Endothelial cell of umbilical vein (primary cell): ENCODE measurements at regions of chr3 and their contacts with region 1.

Region 1: GRCh38 chr3:4271834-4272233 is 31.3 kb upstream of the SETMAR start:
- DNase-seq: peak; percentile 35
- H3K4me3 ChIP-seq: no peak overlapping the region
- H3K27ac ChIP-seq: no peak overlapping the region
- H3K4me1 ChIP-seq: no peaks in the 10 kb centered on the region
- H3K27me3 ChIP-seq: peaks cover 0 to 3% of the 10 kb centered on the region in 2 experiments
- CTCF ChIP-seq: peak in 1 of 2 donors; percentile 25
- POLR2A ChIP-seq: no peak

Region 2: DNA sequence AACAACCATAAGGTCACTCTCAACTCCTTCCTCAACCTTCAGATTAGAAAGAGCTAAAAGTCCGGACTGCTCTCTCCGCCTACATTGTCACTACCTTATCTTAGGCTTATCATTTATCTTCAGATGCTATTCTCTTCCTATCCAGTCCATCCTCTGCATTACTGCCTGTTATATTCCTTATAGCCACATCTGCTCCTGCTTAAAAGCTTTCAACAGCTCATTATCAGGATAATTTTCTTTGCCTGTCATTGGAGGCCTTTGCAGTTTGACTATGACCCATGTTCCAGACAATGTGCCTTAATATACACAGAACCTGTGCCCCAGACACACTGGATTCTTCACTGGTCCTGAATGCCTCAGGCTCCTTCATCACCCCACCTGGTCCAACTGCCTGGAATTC is 152.7 kb before region 1 on chr3:
- CTCF ChIA-PET with region 1: interaction called, 10 read pairs
- POLR2A ChIA-PET with region 1: no interaction called
- dilution Hi-C with region 1: no loop called
- intact Hi-C with region 1: no loop called
- DNase-seq: no peak
- H3K4me3 ChIP-seq: no peak overlapping the region
- H3K27ac ChIP-seq: no peak overlapping the region
- H3K4me1 ChIP-seq: no peaks in the 10 kb centered on the region
- H3K27me3 ChIP-seq: no peaks in the 10 kb centered on the region
- CTCF ChIP-seq: no peak
- POLR2A ChIP-seq: no peak

Region 3: DNA sequence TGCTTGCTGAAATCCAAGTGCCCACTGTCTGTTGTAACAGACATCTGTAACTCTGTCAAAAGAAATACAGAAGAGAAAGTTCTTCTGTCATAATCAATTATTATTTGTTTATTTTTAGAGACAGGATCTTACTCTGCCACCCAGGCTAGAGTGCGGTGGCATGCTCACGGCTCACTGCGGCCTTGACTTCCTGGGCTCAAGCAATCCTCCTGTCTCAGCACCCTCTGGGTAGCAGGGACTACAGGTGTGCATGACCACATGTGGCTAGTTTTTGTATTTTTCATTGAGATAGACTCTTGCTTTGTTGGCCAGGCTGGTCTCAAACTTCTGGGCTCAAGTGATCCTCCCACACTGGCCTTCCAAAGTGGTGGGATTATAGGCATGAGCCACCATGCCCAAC is 146.3 kb before region 1 on chr3:
- CTCF ChIA-PET with region 1: interaction called, 42 read pairs
- POLR2A ChIA-PET with region 1: no interaction called
- dilution Hi-C with region 1: no loop called
- intact Hi-C with region 1: no loop called
- DNase-seq: no peak
- H3K4me3 ChIP-seq: no peak overlapping the region
- H3K27ac ChIP-seq: no peak overlapping the region
- H3K4me1 ChIP-seq: no peaks in the 10 kb centered on the region
- H3K27me3 ChIP-seq: no peaks in the 10 kb centered on the region
- CTCF ChIP-seq: no peak
- POLR2A ChIP-seq: no peak

Region 4: DNA sequence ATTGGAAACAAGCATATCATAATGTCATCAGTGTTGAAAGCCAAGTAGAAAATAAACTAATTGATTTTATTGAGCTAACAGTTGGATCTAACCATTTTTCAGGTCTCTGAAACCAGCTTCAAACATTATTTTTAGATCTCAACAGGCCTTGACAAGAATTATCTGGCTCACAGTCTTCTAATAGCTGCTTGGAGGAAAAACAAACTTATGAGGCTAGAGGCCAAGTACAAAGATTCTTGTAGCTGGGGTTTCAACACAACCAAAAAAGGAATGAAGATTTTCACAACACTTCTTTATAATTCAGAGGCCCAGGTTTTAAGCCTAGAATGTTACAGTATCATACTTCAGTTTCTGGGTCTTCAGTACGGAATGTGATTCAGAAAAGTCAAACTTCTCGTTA is 35.0 kb after region 1 on chr3:
- CTCF ChIA-PET with region 1: no interaction called
- POLR2A ChIA-PET with region 1: no interaction called
- dilution Hi-C with region 1: no loop called
- intact Hi-C with region 1: no loop called
- DNase-seq: no peak
- H3K4me3 ChIP-seq: no peak overlapping the region
- H3K27ac ChIP-seq: no peak overlapping the region
- H3K4me1 ChIP-seq: peaks cover 9% of the 10 kb centered on the region
- H3K27me3 ChIP-seq: no peaks in the 10 kb centered on the region
- CTCF ChIP-seq: no peak
- POLR2A ChIP-seq: no peak